ENCODE measurements at regions of chr6 and their contacts with region 1.

Region 1: GRCh38 chr6:13908955-13909381 is 15.8 kb upstream of the RNF182 start:
- DNase-seq: peak; percentile 62 to 66
- H3K4me3 ChIP-seq: no peak overlapping the region
- H3K4me3 Mint-ChIP-seq: no peak overlapping the region
- H3K27ac Mint-ChIP-seq: no peak overlapping the region
- H3K4me1 ChIP-seq: peaks cover 12% of the 10 kb centered on the region
- H3K4me1 Mint-ChIP-seq: peaks cover 11% of the 10 kb centered on the region
- H3K27me3 ChIP-seq: no peaks in the 10 kb centered on the region
- H3K27me3 Mint-ChIP-seq: no peaks in the 10 kb centered on the region
- CTCF ChIP-seq: peak; percentile 74 to 75

Region 2: GRCh38 chr6:13859871-13860555 is 49.0 kb before region 1 on chr6:
- CTCF ChIA-PET with region 1: no interaction called
- POLR2A ChIA-PET with region 1: no interaction called
- intact Hi-C with region 1: no loop called
- DNase-seq: no peak
- H3K4me3 ChIP-seq: no peak overlapping the region
- H3K4me3 Mint-ChIP-seq: no peak overlapping the region
- H3K27ac Mint-ChIP-seq: no peak overlapping the region
- H3K4me1 ChIP-seq: peaks cover 25% of the 10 kb centered on the region
- H3K4me1 Mint-ChIP-seq: peaks cover 6% of the 10 kb centered on the region
- H3K27me3 ChIP-seq: no peaks in the 10 kb centered on the region
- H3K27me3 Mint-ChIP-seq: no peaks in the 10 kb centered on the region
- CTCF ChIP-seq: no peak

Region 3: DNA sequence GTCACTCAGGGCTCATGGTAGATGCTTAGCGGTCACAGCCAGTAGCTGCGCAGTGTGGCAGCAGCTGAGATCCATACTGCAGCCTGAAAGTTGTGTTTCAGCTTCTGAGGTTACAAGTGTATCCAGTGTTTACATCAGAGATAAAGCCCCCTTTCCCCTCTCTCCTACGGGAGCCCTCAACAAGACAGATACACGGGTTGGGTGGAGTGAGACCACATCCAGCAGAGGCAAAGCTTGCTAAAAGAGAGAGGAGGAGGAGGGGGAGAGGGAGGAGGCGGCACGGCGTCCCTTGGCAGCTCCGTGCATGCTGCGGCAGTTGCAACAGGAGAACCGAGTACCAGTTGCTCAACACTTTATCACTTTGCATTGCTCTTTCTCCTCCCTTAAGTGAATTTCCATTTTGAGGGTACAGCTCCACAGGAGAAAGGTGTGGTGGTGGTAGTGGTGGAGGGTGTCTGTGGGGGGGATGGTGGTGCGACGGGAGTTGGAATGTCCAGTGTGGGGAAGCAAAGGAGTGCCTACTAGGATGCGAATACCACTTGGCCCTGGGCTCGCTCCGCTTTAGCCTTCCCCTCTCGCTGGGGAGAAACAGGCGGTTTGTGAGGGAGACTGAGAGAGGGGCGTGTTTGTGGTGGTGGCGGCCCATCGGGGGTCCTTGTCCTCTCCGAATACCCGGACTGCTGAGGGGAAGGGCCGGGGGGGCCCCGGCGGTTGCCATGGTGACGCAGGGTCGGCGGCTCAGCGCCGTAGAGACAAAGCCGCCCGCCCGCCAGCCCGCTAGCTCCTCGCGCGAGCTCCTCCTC is 15.4 kb after region 1 on chr6:
- CTCF ChIA-PET with region 1: no interaction called
- POLR2A ChIA-PET with region 1: no interaction called
- intact Hi-C with region 1: loop called (anchors 1 kb)
- DNase-seq: no peak
- H3K4me3 ChIP-seq: peak overlapping the region; percentile 37
- H3K4me3 Mint-ChIP-seq: peak overlapping the region; percentile 77
- H3K27ac Mint-ChIP-seq: no peak overlapping the region
- H3K4me1 ChIP-seq: no peaks in the 10 kb centered on the region
- H3K4me1 Mint-ChIP-seq: peaks cover 11% of the 10 kb centered on the region
- H3K27me3 ChIP-seq: peaks cover 5% of the 10 kb centered on the region
- H3K27me3 Mint-ChIP-seq: peaks cover 14% of the 10 kb centered on the region
- CTCF ChIP-seq: no peak

Region 4: DNA sequence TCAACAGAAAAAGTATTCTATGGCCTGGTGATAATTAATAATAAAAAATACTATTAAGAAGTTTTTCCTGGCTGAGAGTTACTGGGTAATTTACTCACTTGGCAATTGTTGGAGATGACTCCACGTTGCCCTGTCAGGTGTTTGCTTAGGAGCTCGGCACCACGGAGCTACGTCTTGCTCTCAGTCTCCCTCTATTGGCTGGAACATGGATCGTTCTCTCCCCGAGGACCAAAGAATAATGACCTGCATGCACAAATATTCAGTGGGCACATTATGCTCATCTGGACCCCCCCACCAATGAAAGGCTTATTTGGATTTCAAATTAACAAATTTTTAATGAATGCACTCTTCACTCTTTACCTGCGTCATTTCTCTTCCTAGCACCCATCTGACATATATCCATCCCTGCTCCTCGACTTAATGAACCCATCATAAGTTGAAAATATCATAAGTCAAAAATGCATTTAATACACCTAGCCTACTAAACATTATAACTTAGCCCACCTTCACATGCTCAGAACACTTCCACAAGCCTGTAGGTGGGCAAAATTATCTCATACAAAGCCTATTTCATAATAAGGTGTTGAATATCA is 137.6 kb after region 1 on chr6:
- CTCF ChIA-PET with region 1: interaction called, 24 read pairs
- POLR2A ChIA-PET with region 1: no interaction called
- intact Hi-C with region 1: loop called (anchors 1 kb)
- DNase-seq: peak; percentile 41 to 60
- H3K4me3 ChIP-seq: no peak overlapping the region
- H3K4me3 Mint-ChIP-seq: no peak overlapping the region
- H3K27ac Mint-ChIP-seq: no peak overlapping the region
- H3K4me1 ChIP-seq: no peaks in the 10 kb centered on the region
- H3K4me1 Mint-ChIP-seq: no peaks in the 10 kb centered on the region
- H3K27me3 ChIP-seq: no peaks in the 10 kb centered on the region; the same call in 1 of the 2 replicates
- H3K27me3 Mint-ChIP-seq: peaks cover 17% of the 10 kb centered on the region
- CTCF ChIP-seq: peak; percentile 68 to 75

Region 5: GRCh38 chr6:14066782-14067406 is 157.9 kb after region 1 on chr6:
- CTCF ChIA-PET with region 1: interaction called, 13 read pairs
- POLR2A ChIA-PET with region 1: no interaction called
- intact Hi-C with region 1: loop called (anchors 1 kb)
- DNase-seq: peak in 1 of 2 experiments; percentile 51
- H3K4me3 ChIP-seq: no peak overlapping the region
- H3K4me3 Mint-ChIP-seq: no peak overlapping the region
- H3K27ac Mint-ChIP-seq: no peak overlapping the region
- H3K4me1 ChIP-seq: no peaks in the 10 kb centered on the region
- H3K4me1 Mint-ChIP-seq: peaks cover 7% of the 10 kb centered on the region
- H3K27me3 ChIP-seq: no peaks in the 10 kb centered on the region
- H3K27me3 Mint-ChIP-seq: peaks cover 3% of the 10 kb centered on the region
- CTCF ChIP-seq: peak; percentile 57 to 60

Region 6: DNA sequence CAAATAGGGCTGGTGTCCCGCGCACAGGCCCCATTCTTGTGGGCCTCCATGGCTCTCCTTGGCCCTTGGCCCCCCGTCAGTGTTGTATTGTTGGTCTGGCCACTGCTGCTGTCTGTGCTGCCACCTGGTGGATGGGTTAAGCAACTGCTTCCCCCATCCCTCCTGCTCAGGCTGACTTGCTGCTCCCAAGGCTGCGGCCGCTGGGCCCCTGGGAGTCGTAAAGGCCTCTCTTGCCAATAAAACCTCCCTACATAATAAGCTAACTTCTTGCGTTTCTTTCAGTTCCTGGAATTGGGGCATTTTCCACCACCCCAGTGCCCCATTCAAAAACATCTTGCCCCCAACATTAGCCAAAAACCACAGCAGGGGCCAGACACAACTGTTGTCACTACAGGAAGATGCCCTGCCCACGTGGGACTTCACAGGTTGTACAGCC is 235.7 kb after region 1 on chr6:
- CTCF ChIA-PET with region 1: interaction called, 3 read pairs
- POLR2A ChIA-PET with region 1: no interaction called
- intact Hi-C with region 1: loop called (anchors 1 kb)
- DNase-seq: peak; percentile 73 to 82
- H3K4me3 ChIP-seq: no peak overlapping the region
- H3K4me3 Mint-ChIP-seq: no peak overlapping the region
- H3K27ac Mint-ChIP-seq: no peak overlapping the region
- H3K4me1 ChIP-seq: no peaks in the 10 kb centered on the region
- H3K4me1 Mint-ChIP-seq: no peaks in the 10 kb centered on the region
- H3K27me3 ChIP-seq: no peaks in the 10 kb centered on the region
- H3K27me3 Mint-ChIP-seq: peaks cover 2% of the 10 kb centered on the region
- CTCF ChIP-seq: peak; percentile 82 to 92

Measured in Caco-2 (cell line).